ENCODE measurements at regions of chr16 and their contacts with region 1.

Region 1: DNA sequence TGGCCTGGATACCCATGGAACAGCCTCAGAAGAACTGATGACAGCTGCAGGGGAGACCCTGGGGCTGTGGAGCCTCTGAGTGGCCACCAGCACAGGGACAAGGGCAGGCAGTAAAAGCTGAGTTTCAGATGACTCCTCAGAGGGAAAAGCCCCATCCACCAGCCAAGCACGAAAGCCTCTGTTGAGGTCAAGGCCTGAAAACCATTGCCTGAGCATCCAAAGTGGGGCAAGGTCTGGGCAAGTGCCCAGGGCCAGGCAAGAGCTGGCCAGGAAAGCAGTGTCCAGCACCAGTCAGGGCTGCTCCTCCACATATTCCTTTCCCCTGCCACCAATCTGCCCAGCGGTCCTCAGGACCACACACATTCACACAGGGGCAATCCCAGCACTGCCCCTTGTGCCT is 16.4 kb downstream of the ATP6V0D1 start:
- DNase-seq: no peak
- H3K4me3 ChIP-seq: no peak overlapping the region
- H3K27me3 ChIP-seq: no peaks in the 10 kb centered on the region
- CTCF ChIP-seq: no peak

Region 2: GRCh38 chr16:67260426-67261075 is 204.0 kb before region 1 on chr16:
- CTCF ChIA-PET with region 1: interaction called, 11 read pairs
- POLR2A ChIA-PET with region 1: no interaction called
- DNase-seq: no peak
- H3K4me3 ChIP-seq: no peak overlapping the region
- H3K27me3 ChIP-seq: no peaks in the 10 kb centered on the region
- CTCF ChIP-seq: peak; percentile 73

Region 3: DNA sequence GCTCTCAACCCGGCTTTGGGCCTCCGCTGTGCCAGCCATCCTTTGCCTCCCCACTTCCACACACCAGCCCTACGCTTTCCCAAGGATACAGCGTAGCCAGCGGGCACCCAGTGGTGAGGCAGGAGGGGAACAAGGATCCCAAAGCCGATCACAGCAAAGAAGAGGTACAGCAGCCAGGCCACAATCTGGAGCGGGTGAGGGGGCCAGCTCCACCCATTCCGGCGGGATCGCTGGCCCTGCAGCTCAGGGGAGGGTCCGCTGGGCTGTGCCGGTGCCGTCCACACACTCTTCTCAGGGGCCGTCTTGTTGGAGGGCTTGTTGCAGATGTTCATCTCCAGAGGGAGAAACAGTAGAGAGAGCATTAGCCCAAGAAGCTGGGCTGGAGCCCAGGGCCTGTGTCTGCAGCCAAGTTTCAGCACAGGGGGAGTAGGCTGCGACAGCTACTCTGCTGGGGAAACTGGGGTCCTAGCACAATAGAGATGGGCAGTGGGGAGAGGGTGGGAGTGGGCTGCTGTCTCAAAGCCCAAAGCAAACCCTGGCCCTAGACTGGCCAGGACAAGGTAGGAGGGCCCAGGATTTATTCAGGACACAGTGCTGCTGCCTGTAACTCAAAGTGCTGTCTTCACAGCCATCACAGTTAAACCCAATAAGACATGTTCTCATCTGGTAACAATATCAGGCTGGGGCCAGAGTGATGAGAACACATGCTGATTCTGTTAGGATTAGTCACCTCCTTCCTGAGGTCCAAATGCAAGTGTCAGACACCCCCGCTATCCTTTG is 58.3 kb before region 1 on chr16:
- CTCF ChIA-PET with region 1: interaction called, 20 read pairs
- POLR2A ChIA-PET with region 1: no interaction called
- DNase-seq: peak; percentile 78
- H3K4me3 ChIP-seq: no peak overlapping the region
- H3K27me3 ChIP-seq: no peaks in the 10 kb centered on the region
- CTCF ChIP-seq: no peak

Region 4: DNA sequence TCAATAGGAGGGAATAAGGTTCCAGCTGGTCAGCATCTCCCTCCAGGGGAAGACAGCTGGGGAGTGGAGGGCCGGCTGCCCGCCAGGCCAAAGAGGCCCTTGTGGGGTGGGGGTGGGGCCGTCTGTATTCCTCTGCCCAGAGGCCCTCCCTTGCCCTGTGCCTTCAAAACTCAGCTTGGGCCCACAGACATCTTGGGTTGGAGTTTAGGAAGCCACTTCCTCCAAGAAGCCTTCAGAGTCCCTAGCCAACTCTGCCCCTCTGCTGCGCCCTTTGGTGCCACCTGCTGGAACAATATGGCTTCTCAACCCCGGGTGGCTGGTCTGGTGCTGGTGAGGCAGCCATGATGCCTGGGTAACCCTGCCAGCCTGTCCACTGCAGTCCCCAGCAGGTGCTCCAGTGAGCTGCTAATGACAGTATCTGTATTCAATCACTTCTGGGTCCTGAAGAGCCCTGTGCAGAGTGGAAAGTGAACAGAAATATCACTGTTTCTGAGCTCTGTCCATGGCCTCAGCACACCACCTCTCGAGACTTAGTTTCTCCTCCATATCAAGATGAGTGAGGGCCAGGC is 17.0 kb before region 1 on chr16:
- CTCF ChIA-PET with region 1: interaction called, 39 read pairs
- POLR2A ChIA-PET with region 1: no interaction called
- DNase-seq: no peak
- H3K4me3 ChIP-seq: no peak overlapping the region
- H3K27me3 ChIP-seq: no peaks in the 10 kb centered on the region
- CTCF ChIP-seq: peak; percentile 56

Region 5: GRCh38 chr16:67480833-67481560 is 16.4 kb after region 1 on chr16 and contains the start of gene ATP6V0D1:
- CTCF ChIA-PET with region 1: interaction called, 16 read pairs
- POLR2A ChIA-PET with region 1: interaction called, 3 read pairs
- DNase-seq: peak; percentile 89
- H3K4me3 ChIP-seq: peak within 1 kb of the TSS; percentile 86
- H3K27me3 ChIP-seq: no peaks in the 10 kb centered on the region
- CTCF ChIP-seq: peak; percentile 87
- polyA plus RNA-seq, gene ATP6V0D1: 111 and 155 TPM in 2 replicates

Region 6: GRCh38 chr16:67504041-67505021 is 39.8 kb after region 1 on chr16:
- CTCF ChIA-PET with region 1: no interaction called
- POLR2A ChIA-PET with region 1: no interaction called
- DNase-seq: no peak
- H3K4me3 ChIP-seq: no peak overlapping the region
- H3K27me3 ChIP-seq: no peaks in the 10 kb centered on the region
- CTCF ChIP-seq: no peak

Region 7: GRCh38 chr16:67561824-67562525 is 97.4 kb after region 1 on chr16:
- CTCF ChIA-PET with region 1: no interaction called
- POLR2A ChIA-PET with region 1: no interaction called
- DNase-seq: peak; percentile 86
- H3K4me3 ChIP-seq: peak overlapping the region; percentile 67
- H3K27me3 ChIP-seq: no peaks in the 10 kb centered on the region
- CTCF ChIP-seq: no peak

Region 8: DNA sequence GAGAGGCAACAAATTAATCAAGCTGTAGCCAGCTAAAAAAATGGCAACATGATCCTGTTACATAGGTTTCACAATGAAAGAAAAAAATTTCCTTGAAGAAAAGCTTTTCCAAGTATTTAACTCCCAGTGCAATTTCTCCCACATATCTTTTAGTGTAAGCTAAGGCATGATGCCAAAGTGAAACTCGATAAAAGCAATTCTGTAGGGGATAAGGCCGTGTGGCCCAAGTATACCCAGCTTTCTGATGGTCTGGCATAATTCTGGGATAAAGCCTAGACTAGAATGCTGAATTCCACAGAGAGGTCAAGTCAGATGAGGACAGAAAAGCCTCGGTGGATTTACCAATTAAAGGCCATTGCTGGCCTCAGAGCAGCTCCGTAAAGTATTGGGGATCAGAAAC is 134.0 kb after region 1 on chr16:
- CTCF ChIA-PET with region 1: no interaction called
- POLR2A ChIA-PET with region 1: no interaction called
- DNase-seq: no peak
- H3K4me3 ChIP-seq: no peak overlapping the region
- H3K27me3 ChIP-seq: no peaks in the 10 kb centered on the region
- CTCF ChIP-seq: no peak

Region 9: GRCh38 chr16:68707341-68708152 is 1243.0 kb after region 1 on chr16:
- CTCF ChIA-PET with region 1: no interaction called
- POLR2A ChIA-PET with region 1: no interaction called
- DNase-seq: no peak
- H3K4me3 ChIP-seq: no peak overlapping the region
- H3K27me3 ChIP-seq: peaks cover 4% of the 10 kb centered on the region; the same call in 1 of the 2 replicates
- CTCF ChIP-seq: 0 out of 2 replicates have a peak, but pooled peaks have one; percentile 9

Measured in BJ (cell line).